ENCODE measurements at regions of chr14 and their contacts with region 1.

Region 1: GRCh38 chr14:50954811-50955372 is 10.6 kb upstream of the PYGL start:
- DNase-seq: peak; percentile 45
- ATAC-seq: peak; percentile 79; the same call in 1 of the 2 replicates
- H3K4me3 ChIP-seq: no peak overlapping the region
- H3K27ac ChIP-seq: no peak overlapping the region
- H3K4me1 ChIP-seq: no peaks in the 10 kb centered on the region
- H3K27me3 ChIP-seq: no peaks in the 10 kb centered on the region
- CTCF ChIP-seq: peak; percentile 53; the same call in 1 of the 2 replicates

Region 2: DNA sequence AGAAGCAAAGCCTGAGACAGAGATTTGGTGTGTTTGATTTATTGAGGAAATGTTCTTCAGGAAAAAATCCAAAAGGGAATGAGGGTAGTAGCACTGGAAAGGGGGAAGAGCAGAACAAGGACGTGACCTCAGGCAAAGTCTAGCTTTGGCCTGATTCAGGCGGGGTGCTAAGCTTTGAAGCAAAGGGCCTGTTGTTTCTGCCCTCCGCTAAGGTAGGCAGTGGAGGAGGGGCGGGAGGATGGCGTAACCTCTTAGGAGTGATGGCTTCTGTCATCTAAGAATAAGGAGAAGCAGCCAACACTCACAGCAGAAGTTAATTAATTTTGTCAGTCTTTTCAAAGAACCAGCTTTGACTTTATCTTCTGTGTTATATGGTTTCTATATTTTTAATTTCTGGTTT is 62.6 kb before region 1 on chr14:
- CTCF ChIA-PET with region 1: no interaction called
- POLR2A ChIA-PET with region 1: no interaction called
- in situ Hi-C with region 1: no loop called
- intact Hi-C with region 1: no loop called
- DNase-seq: no peak
- ATAC-seq: no peak
- H3K4me3 ChIP-seq: no peak overlapping the region
- H3K27ac ChIP-seq: no peak overlapping the region
- H3K4me1 ChIP-seq: no peaks in the 10 kb centered on the region
- H3K27me3 ChIP-seq: no peaks in the 10 kb centered on the region
- CTCF ChIP-seq: no peak

Region 3: GRCh38 chr14:51094901-51095853 is 140.3 kb after region 1 on chr14 and contains the start of gene TRIM9:
- CTCF ChIA-PET with region 1: interaction called, 3 read pairs
- POLR2A ChIA-PET with region 1: no interaction called
- in situ Hi-C with region 1: no loop called
- intact Hi-C with region 1: loop called (anchors 10 kb)
- DNase-seq: peak; percentile 38
- ATAC-seq: peak; percentile 99
- H3K4me3 ChIP-seq: peak within 1 kb of the TSS; percentile 58 to 64
- H3K27ac ChIP-seq: no peak within 1 kb of the TSS
- H3K4me1 ChIP-seq: no peaks in the 10 kb centered on the region; the same call in 1 of the 2 replicates
- H3K27me3 ChIP-seq: peaks cover 6% of the 10 kb centered on the region; the same call in 1 of the 2 replicates
- CTCF ChIP-seq: no peak
- total RNA-seq, gene TRIM9: 0.44 TPM

Region 4: DNA sequence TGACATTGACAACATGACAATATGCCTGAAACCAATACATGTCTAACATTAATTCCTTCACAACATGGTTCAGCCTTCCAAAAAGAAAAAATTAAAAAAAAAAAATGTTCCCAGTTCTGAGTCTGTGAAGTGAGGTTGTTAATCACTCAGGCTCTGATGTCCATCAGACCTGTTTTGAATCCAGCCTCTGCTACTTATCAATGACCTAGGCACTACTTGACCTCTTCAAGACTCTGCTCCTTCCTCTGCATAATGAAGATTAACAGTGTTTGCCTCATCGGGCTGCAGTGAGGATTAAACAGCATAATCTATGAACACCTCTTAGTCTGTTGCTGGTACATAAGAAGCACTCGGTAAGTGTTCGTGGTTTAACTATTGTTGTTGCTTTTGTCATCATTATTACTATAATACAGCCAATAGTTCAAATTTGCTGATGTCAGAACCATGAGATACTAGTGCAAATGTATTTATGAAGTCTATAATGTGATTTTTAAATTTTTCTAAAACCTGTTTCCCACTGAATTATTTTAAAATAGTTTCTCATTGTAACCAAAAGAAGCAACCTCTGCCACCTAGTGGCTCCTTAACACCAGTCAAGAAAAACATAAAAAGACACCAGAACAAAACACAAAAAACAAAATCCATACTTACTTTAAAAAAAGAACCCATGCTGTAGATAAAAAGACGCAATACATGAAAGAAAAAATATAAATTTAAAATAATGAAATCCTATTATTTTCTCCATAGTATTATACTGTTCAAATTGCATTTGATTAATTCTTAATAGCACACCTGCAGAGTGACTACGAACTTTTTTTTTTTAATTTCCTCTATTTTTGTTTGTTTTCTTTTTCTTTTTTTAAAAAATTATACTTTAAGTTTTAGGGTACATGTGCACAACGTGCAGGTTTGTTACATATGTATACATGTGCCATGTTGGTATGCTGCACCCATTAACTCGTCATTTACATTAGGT is 264.9 kb after region 1 on chr14:
- CTCF ChIA-PET with region 1: no interaction called
- POLR2A ChIA-PET with region 1: no interaction called
- in situ Hi-C with region 1: no loop called
- intact Hi-C with region 1: loop called (anchors 10 kb)
- DNase-seq: no peak
- ATAC-seq: no peak
- H3K4me3 ChIP-seq: no peak overlapping the region
- H3K27ac ChIP-seq: no peak overlapping the region
- H3K4me1 ChIP-seq: no peaks in the 10 kb centered on the region
- H3K27me3 ChIP-seq: peaks cover 2% of the 10 kb centered on the region; the same call in 1 of the 2 replicates
- CTCF ChIP-seq: peak; percentile 48; the same call in 1 of the 2 replicates

Region 5: DNA sequence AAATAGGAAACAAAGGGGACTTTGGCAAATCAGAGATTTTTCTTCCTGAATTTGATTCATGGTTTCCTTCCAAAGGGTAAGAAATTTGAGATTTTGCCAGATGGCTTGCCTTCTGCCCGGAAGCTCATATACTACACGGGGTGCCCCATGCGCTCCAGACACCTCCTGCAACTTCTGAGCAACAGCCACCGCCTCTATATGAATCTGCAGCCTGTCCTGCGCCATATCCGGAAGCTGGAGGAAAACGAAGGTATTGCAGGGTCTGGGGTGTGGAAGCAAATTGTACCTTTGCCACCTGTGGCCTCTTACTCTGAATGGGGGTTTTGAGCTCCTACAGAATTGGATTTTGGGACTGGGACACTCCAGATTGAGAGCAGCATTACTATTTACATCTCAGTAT is 760.4 kb after region 1 on chr14:
- CTCF ChIA-PET with region 1: interaction called, 11 read pairs
- POLR2A ChIA-PET with region 1: no interaction called
- in situ Hi-C with region 1: no loop called
- intact Hi-C with region 1: no loop called
- DNase-seq: no peak
- ATAC-seq: no peak
- H3K4me3 ChIP-seq: no peak overlapping the region
- H3K27ac ChIP-seq: no peak overlapping the region
- H3K4me1 ChIP-seq: no peaks in the 10 kb centered on the region
- H3K27me3 ChIP-seq: no peaks in the 10 kb centered on the region
- CTCF ChIP-seq: no peak

Measured in Panc1 (cell line).